ENCODE measurements at regions of chr19 and their contacts with region 1.

Region 1: DNA sequence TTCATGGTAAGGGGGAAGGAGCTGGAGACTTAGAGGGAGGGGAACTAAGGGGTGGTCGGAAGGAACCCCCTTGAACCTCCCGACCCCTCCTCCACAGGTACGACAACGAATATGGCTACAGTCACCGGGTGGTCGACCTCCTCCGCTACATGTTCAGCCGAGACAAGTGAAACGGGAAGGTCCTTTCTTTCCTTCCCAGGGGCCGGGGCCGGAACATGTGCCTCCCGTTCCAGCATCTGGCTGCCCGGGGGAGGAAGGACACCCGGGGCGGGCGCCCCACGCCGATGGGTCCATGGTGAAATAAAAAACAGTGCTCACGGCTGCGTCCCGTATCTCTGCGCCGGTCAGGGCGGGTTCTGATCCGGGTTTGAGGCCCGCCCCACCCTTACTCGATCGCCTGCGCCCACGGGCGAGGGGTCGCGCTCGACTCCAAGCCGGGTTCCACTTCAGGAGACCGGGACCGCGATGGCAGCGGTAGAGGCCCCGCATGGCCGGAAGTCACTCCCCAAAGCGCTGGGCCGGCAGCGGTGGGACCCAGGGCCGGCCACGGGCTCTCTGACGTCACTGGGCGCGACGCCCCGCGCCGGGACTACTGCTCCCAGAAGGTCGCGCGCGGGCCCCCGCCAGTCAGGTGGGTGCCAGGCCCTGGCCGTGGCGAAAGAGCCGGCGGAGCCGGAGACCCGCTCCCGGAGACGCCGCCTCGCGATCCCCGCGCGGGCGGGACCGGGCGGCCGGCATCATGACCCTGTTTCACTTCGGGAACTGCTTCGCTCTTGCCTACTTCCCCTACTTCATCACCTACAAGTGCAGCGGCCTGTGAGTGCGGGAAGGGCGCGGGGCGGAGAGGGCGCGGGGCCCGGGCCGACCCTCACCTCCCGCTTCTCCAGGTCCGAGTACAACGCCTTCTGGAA is at the start of gene TMEM147:
- DNase-seq: peak; percentile 93
- ATAC-seq: peak; percentile 77
- H3K4me3 Mint-ChIP-seq: peak within 1 kb of the TSS; percentile 92
- H3K27ac Mint-ChIP-seq: peak within 1 kb of the TSS; percentile 91
- H3K4me1 Mint-ChIP-seq: peaks cover 35% of the 10 kb centered on the region
- H3K27me3 Mint-ChIP-seq: no peaks in the 10 kb centered on the region
- total RNA-seq, gene TMEM147: 73.1 to 73.8 TPM

Region 2: DNA sequence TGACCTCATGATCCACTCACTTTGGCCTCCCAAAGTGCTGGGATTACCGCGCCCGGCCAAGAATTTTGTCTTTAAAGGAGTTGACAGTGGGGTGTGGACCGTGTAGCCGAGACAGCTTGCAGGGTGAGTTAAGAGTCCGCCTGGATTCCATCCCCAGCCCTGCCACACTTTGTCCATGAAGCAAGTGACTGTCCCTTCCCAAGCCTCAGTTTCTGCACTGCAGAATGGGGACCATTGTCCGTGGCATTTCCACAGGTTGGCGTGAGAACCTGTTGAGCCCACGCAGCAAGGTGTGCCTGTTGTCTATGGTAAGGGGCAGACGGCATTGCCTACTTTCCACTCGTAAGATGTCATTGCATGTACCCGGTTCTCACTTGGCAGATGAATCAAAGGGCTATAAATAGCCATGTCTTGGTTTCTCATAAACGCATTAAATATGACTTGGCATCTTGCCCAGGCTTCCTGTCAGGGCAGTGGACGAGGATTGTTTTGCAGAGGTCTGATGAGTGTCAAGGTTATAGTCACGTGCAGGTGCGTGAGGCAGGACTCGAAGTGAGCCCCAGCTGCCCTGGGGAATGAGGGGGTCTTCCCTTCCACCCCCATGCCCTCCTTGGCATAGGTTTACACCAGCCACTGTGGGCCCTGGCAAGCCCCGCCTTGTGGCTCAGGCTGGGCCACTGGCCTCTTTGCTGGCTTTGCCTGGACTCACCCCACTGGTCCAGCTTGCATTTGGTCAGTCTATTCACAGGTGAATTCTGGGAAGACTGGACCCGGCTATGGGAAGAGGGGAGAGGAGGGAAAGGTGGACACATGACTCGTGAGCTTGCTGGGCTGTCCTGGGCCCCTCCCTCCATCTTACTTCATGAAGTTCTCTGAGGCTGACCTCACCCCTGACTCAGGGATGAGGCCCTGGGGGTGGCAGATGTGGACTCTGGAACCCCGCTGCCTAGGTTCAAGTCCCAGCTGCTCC is 331.3 kb before region 1 on chr19:
- CTCF ChIA-PET with region 1: no interaction called
- POLR2A ChIA-PET with region 1: interaction called, 3 read pairs
- intact Hi-C with region 1: loop called in 1 of 2 experiments (anchors 1 kb)
- DNase-seq: peak; percentile 88
- ATAC-seq: peak; percentile 67
- H3K4me3 Mint-ChIP-seq: peak overlapping the region; percentile 41
- H3K27ac Mint-ChIP-seq: peak overlapping the region; percentile 96
- H3K4me1 Mint-ChIP-seq: peaks cover 65% of the 10 kb centered on the region
- H3K27me3 Mint-ChIP-seq: no peaks in the 10 kb centered on the region

Region 3: GRCh38 chr19:35468637-35469036 is 76.6 kb before region 1 on chr19:
- CTCF ChIA-PET with region 1: no interaction called
- POLR2A ChIA-PET with region 1: no interaction called
- intact Hi-C with region 1: no loop called
- DNase-seq: peak; percentile 81
- ATAC-seq: peak; percentile 100
- H3K4me3 Mint-ChIP-seq: no peak overlapping the region
- H3K27ac Mint-ChIP-seq: no peak overlapping the region
- H3K4me1 Mint-ChIP-seq: peaks cover 7% of the 10 kb centered on the region
- H3K27me3 Mint-ChIP-seq: no peaks in the 10 kb centered on the region

Region 4: DNA sequence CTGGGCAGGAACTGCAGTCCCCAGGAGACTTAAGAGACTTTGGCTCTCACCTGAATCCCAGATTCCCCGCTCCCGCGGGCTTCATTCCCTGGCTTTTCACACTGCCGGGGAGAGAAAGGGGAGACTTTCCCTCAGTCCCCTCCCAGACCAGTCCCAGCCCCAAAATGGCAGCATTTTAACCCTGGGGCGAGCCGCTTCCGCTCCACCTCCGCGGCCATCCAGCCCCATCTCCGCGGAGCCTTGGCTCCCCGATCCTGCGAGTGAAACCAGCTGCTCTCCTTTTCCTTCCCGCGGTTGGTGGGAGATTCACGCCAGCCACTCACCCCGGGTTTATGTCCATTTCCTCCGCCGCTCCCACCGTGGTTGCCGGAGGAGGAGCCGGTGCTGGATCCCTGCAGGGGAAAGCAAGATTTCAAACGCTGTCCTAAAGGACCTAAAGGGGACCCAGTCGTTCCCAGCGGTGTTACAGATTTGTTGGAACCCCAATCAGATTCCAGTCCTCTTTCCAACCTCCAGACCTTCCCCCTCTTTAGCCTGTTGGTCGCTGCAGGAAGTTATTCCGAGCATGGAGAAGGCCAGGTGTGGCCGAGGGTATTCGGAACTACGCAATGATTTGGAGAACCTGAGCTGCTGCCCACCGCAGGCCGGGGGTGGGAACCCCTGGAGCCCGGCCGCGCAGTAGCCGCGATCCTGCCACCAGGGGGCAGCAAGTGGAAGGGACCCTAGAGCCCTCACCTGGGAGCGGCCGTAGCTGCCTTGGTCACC is 35.2 kb before region 1 on chr19:
- CTCF ChIA-PET with region 1: interaction called, 8 read pairs
- POLR2A ChIA-PET with region 1: no interaction called
- intact Hi-C with region 1: loop called in 1 of 2 experiments (anchors 2 kb)
- DNase-seq: peak; percentile 87
- ATAC-seq: peak; percentile 79
- H3K4me3 Mint-ChIP-seq: peak overlapping the region; percentile 43
- H3K27ac Mint-ChIP-seq: no peak overlapping the region
- H3K4me1 Mint-ChIP-seq: peaks cover 15% of the 10 kb centered on the region
- H3K27me3 Mint-ChIP-seq: peaks cover 43% of the 10 kb centered on the region

Region 5: DNA sequence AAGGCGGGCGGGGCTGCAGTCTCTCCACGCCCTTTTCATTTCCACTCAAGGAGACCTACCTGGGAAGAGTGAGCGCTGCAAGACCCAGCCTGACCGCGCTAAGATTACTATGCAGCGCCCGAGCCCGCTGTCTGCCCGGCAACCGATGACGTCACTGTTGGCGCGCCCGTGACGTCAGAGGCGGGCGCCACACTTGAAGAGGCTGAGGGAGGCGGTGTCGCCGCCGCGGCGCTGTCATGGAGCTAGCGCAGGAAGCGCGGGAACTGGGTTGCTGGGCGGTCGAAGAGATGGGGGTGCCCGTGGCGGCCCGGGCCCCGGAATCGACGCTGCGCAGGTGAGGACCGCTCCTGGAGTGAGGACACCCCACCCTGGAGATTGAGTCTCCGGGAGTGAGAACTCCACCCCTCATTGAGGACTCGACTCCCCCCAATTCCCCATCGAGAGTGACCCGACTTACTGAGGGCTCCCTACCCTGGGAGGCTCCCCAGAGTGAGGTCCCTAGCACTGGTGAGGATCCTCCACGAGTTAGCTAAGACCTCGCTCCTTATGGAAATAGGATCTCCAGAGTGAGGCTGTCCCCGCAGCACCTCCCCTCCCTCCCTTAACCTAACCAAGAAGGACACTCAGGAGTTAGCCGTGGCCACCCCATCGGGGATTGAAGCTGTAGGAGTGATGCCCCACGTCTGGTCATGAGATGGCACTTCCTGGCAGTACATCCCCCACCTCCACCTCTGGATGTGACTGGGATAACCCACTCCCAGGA is 67.5 kb after region 1 on chr19 and contains the start of gene HAUS5:
- CTCF ChIA-PET with region 1: interaction called, 4 read pairs
- POLR2A ChIA-PET with region 1: no interaction called
- intact Hi-C with region 1: loop called in 1 of 2 experiments (anchors 1 kb)
- DNase-seq: peak; percentile 98
- ATAC-seq: peak; percentile 96
- H3K4me3 Mint-ChIP-seq: peak within 1 kb of the TSS; percentile 81
- H3K27ac Mint-ChIP-seq: peak within 1 kb of the TSS; percentile 90
- H3K4me1 Mint-ChIP-seq: peaks cover 23% of the 10 kb centered on the region
- H3K27me3 Mint-ChIP-seq: no peaks in the 10 kb centered on the region
- total RNA-seq, gene HAUS5: 39.7 to 41.0 TPM

Region 6: DNA sequence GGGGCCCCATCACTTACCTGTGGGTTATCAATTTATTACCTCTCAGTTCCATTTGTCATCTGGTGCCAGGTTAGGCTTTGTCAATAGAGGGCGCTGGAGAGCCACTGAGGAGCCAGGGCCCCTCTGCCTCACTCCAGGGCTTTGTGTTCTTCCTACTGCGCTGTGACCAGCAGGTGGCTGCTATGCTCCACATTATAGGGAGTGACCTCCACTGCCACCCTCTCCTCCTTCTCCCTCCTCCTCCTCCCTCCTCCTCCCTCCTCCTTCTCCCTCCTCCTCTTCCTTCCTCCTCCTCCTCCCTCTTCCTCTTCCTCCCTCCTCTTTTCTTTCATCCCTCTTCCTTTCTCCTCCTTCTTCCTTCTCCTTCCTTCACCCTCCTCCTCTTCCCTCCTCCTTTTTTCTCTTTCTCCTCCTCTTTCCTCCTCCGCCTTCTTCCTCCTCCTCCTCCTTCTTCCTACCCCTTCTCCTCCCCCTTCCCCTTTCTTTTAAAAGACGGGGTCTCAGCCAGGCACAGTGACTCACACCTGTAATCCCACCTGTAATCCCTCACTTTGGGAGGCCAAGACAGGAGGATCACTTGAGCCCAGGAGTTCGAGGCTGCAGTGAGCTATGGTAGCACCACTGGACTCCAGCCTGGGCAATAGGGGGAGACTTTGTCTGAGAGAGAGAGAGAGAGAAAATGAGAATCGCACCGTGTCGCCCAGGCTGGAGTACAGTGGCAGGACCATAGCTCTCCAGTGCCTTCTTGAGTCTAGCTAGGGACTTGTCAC is 148.8 kb after region 1 on chr19:
- CTCF ChIA-PET with region 1: no interaction called
- POLR2A ChIA-PET with region 1: no interaction called
- intact Hi-C with region 1: loop called in 1 of 2 experiments (anchors 5 kb)
- DNase-seq: peak; percentile 95
- ATAC-seq: peak; percentile 97
- H3K4me3 Mint-ChIP-seq: no peak overlapping the region
- H3K27ac Mint-ChIP-seq: peak overlapping the region; percentile 43
- H3K4me1 Mint-ChIP-seq: peaks cover 17% of the 10 kb centered on the region
- H3K27me3 Mint-ChIP-seq: no peaks in the 10 kb centered on the region

Region 7: GRCh38 chr19:35748106-35749020 is 203.1 kb after region 1 on chr19 and contains the start of gene LIN37:
- CTCF ChIA-PET with region 1: no interaction called
- POLR2A ChIA-PET with region 1: no interaction called
- intact Hi-C with region 1: no loop called
- DNase-seq: peak; percentile 99
- ATAC-seq: peak; percentile 81
- H3K4me3 Mint-ChIP-seq: peak within 1 kb of the TSS; percentile 89
- H3K27ac Mint-ChIP-seq: peak within 1 kb of the TSS; percentile 94
- H3K4me1 Mint-ChIP-seq: peaks cover 40% of the 10 kb centered on the region
- H3K27me3 Mint-ChIP-seq: no peaks in the 10 kb centered on the region
- total RNA-seq, gene LIN37: 8.4 to 12.7 TPM

Region 8: GRCh38 chr19:35869327-35870123 is 324.3 kb after region 1 on chr19:
- CTCF ChIA-PET with region 1: no interaction called
- POLR2A ChIA-PET with region 1: no interaction called
- intact Hi-C with region 1: loop called in 1 of 2 experiments (anchors 1 kb)
- DNase-seq: peak; percentile 95
- ATAC-seq: peak; percentile 93
- H3K4me3 Mint-ChIP-seq: peak overlapping the region; percentile 52
- H3K27ac Mint-ChIP-seq: no peak overlapping the region
- H3K4me1 Mint-ChIP-seq: peaks cover 14% of the 10 kb centered on the region
- H3K27me3 Mint-ChIP-seq: peaks cover 37% of the 10 kb centered on the region